Sigmoid colon (tissue), 7 donors: ENCODE measurements at regions of chr17 and their contacts with region 1.

Region 1: GRCh38 chr17:59753522-59754467 is 46.3 kb downstream of the VMP1 start:
- DNase-seq: no peak
- H3K4me3 ChIP-seq: peak overlapping the region in 3 of 4 donors; percentile 8 to 30 (median 21)
- H3K27ac ChIP-seq: peak overlapping the region; percentile 42 to 84 (median 69)
- H3K4me1 ChIP-seq: peaks cover 0 to 44% (median 27%) of the 10 kb centered on the region in 4 donors
- H3K27me3 ChIP-seq: no peaks in the 10 kb centered on the region
- CTCF ChIP-seq: peak; percentile 15 to 80 (median 63)
- EP300 ChIP-seq: no peak
- POLR2A ChIP-seq: no peak

Region 2: DNA sequence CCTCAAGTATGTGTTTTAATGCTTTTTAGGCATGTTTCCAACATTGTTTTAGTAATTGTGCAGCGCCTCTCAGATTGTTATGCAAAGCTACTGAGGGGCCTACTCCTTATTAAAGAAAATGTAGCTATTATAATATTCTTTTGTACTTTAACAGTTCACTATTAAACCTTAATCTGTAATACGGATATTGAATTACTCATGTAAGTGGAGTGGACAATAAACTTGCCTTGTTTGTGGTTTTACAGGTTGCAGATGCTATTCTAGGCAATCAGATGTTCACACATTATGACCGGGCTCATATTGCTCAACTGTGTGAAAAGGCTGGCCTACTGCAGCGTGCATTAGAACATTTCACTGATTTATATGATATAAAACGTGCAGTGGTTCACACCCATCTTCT is 87.6 kb before region 1 on chr17:
- intact Hi-C with region 1: no loop called
- DNase-seq: no peak
- H3K4me3 ChIP-seq: no peak overlapping the region
- H3K27ac ChIP-seq: no peak overlapping the region
- H3K4me1 ChIP-seq: peaks cover 0 to 7% (median 2%) of the 10 kb centered on the region in 4 donors
- H3K27me3 ChIP-seq: no peaks in the 10 kb centered on the region
- CTCF ChIP-seq: no peak
- EP300 ChIP-seq: no peak
- POLR2A ChIP-seq: no peak

Region 3: GRCh38 chr17:59839651-59840328 is 86.0 kb after region 1 on chr17:
- intact Hi-C with region 1: loop called (anchors 1 kb)
- DNase-seq: no peak
- H3K4me3 ChIP-seq: peak overlapping the region; percentile 50 to 67 (median 56)
- H3K27ac ChIP-seq: peak overlapping the region; percentile 88 to 94 (median 93)
- H3K4me1 ChIP-seq: peaks cover 0 to 43% (median 36%) of the 10 kb centered on the region in 4 donors
- H3K27me3 ChIP-seq: no peaks in the 10 kb centered on the region
- CTCF ChIP-seq: no peak
- EP300 ChIP-seq: no peak
- POLR2A ChIP-seq: no peak

Region 4: DNA sequence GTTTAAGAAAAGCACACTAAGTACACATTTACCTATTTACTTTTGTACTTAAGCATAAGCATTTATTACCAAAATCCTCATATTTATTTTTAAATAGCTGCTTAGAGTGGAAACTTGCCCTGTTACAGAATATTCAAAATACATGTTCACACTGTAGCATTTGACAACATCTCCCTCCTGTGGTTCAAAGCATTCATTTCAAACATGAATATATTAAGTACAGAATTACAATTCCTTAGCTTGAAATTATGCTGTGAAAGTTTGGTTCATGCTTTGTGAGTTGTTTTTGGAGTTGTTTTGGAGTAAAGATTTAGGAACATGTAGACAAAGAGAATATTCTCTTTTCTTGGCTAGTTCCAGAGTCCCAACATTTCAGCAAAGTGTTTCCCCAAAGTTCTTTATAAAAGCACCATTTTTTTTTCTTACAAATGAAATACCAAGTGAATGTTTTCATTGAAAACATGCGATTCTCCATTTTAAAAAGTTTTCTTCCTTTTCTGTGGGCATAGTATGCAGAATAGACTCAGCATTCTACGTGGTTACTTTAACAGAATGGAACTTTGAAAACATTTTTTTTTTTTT is 105.7 kb after region 1 on chr17:
- intact Hi-C with region 1: loop called (anchors 1 kb)
- DNase-seq: peak; percentile 4
- H3K4me3 ChIP-seq: no peak overlapping the region
- H3K27ac ChIP-seq: no peak overlapping the region
- H3K4me1 ChIP-seq: peaks cover 0 to 10% (median 4%) of the 10 kb centered on the region in 4 donors
- H3K27me3 ChIP-seq: no peaks in the 10 kb centered on the region
- CTCF ChIP-seq: peak; percentile 54 to 65 (median 60)
- EP300 ChIP-seq: no peak
- POLR2A ChIP-seq: no peak